GM18951 (cell line): ENCODE measurements at regions of chr18 and their contacts with region 1.

Region 1: GRCh38 chr18:59971871-59972428 is 72.2 kb downstream of the PMAIP1 start:
- POLR2A ChIP-seq: no peak

Region 2: GRCh38 chr18:59837586-59837985 is 134.4 kb before region 1 on chr18:
- in situ Hi-C with region 1: loop called (anchors 10 kb)
- POLR2A ChIP-seq: no peak

Region 3: DNA sequence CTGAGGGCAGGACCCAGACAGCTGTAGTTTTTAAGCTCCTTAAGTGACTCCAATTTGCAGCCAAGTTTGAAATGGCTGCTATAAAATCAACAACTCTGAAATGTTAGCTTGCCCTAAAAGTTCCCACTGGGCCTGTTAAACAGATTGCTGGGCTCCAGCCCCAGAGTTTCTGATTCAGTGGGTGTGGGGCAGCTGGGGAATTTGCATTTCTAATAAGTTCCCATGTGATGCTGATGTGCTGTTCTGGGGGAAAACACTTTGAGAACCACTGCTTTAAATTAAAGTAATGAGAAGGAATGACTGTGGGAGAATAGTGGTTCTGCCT is 48.6 kb after region 1 on chr18:
- in situ Hi-C with region 1: no loop called
- POLR2A ChIP-seq: no peak